ENCODE measurements at regions of chr3 and their contacts with region 1.

Region 1: GRCh38 chr3:134212906-134213665 is 37.6 kb downstream of the RYK start:
- DNase-seq: peak; percentile 87

Region 2: GRCh38 chr3:133812872-133813271 is 400.2 kb before region 1 on chr3:
- intact Hi-C with region 1: loop called (anchors 10 kb)
- DNase-seq: no peak

Region 3: GRCh38 chr3:133927540-133928066 is 285.5 kb before region 1 on chr3:
- intact Hi-C with region 1: loop called (anchors 5 kb)
- DNase-seq: no peak

Region 4: DNA sequence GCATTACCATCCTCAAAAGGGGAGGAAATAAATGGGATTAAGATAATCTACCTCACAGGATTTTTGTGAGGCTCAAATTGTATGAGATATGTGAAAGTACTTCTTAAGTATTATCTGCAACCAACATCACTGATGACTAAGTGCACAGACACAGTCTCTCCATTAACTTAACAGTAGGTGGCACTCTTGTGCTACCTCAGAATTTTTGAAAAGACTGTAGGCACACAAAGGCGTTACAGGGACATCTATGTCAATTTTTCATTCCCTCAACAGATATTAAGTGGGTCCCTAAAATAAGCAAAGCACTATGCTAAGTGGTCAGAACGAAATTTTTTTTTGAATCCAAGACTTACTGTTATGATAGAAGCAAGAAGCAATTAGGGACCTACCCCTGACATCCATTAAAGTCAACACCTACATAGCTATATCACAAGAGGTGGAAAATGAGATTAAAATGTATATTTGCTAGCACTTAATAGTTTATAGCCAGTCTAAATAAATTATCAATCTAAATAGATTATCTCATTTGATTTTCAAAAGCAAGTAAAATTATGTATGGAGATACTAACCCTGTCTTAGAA is 15.3 kb before region 1 on chr3:
- intact Hi-C with region 1: loop called (anchors 2 kb)
- DNase-seq: no peak

Region 5: DNA sequence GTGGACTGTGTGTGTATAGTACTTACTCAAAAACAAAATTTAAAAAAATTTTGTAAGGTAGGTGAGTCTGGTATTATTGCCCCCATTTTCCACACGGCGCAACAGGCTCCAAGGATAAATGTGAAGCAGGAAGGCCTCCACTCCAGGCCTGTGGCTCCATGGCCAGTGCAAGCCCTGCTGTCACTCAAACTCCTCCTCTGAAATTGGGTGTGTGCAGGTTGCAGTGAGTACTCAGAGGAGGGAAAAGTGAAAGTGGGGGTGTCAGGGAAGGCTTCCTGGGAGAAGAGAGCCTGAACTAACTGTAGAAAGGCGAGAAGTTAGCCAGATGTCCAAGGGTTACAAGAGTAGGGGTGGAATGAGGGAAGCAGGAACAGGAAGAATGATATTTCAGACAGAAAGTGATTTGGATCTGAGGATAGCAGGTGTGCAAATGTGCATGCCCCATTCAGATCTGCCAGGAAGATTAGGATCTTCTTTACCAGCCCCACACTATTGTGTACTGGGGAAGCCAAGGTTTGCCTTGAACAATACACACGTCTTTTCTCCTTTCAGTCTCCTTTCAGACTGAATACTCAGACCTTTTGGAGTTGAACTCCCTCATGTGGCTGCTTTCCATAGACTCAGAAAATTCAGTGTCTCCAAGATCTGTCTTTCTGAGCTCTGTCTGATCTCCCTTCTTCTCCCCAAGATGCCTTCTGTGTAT is 86.2 kb after region 1 on chr3:
- intact Hi-C with region 1: loop called (anchors 2 kb)
- DNase-seq: no peak

Region 6: GRCh38 chr3:134373994-134374790 is 161.1 kb after region 1 on chr3 and contains the start of gene AMOTL2:
- intact Hi-C with region 1: loop called (anchors 5 kb)
- DNase-seq: peak; percentile 93
- total RNA-seq, gene AMOTL2: 64.6 TPM

Region 7: GRCh38 chr3:134473868-134474546 is 260.9 kb after region 1 on chr3:
- intact Hi-C with region 1: loop called (anchors 2 kb)
- DNase-seq: no peak

Measured in cardiac septum (tissue), 1 donor.